ENCODE measurements at regions of chr9 and their contacts with region 1.

Region 1: GRCh38 chr9:22119537-22120158 is 110.5 kb upstream of the CDKN2B start:
- DNase-seq: peak in 3 of 9 donors; percentile 4 to 28 (median 27)
- ATAC-seq: peak; percentile 70
- H3K4me3 ChIP-seq: no peak overlapping the region
- H3K4me3 Mint-ChIP-seq: no peak overlapping the region
- H3K27ac ChIP-seq: no peak overlapping the region
- H3K27ac Mint-ChIP-seq: no peak overlapping the region
- H3K4me1 ChIP-seq: no peaks in the 10 kb centered on the region
- H3K4me1 Mint-ChIP-seq: peaks cover 0 to 20% (median 0%) of the 10 kb centered on the region in 7 donors
- H3K27me3 ChIP-seq: no peaks in the 10 kb centered on the region
- H3K27me3 Mint-ChIP-seq: peaks cover 5 to 71% (median 10%) of the 10 kb centered on the region in 5 donors

Region 2: DNA sequence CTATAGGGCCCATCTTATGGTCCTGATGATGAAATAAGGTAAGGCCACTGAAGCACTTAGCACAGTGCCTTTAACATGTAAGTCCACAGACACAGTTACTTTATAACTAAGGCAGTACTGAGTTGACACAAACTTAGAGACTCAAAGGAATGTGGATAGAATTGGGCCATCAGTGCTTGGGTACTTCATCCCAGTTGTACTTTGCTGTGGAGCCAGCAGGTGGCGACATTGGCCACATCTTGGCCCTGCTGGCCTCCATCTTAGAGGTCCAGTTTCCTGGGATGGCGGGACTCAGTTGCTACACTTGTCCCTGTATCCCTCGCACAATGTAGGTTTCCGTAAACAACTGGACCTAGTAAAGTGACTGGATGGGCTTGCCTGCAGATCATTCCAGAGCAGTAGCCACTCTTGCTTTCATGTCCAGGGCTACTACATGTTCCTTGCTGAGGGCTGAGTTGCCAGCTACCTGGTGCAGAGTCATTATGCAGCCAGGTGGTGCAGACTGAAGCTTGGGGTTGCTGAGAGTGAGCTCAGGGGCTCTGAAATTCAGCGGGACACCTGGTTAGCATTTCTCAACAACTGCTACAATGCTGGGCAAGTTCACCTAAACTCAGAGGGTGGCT is 306.6 kb before region 1 on chr9:
- CTCF ChIA-PET with region 1: interaction called, 11 read pairs
- POLR2A ChIA-PET with region 1: no interaction called
- intact Hi-C with region 1: loop called (anchors 1 kb)
- DNase-seq: peak; percentile 11 to 69 (median 50)
- ATAC-seq: peak; percentile 82
- H3K4me3 ChIP-seq: no peak overlapping the region
- H3K4me3 Mint-ChIP-seq: no peak overlapping the region
- H3K27ac ChIP-seq: no peak overlapping the region
- H3K27ac Mint-ChIP-seq: peak overlapping the region in 4 of 9 donors; percentile 6 to 81 (median 64)
- H3K4me1 ChIP-seq: peaks cover 7 to 12% of the 10 kb centered on the region in 2 donors
- H3K4me1 Mint-ChIP-seq: peaks cover 6 to 40% (median 17%) of the 10 kb centered on the region in 7 donors
- H3K27me3 ChIP-seq: no peaks in the 10 kb centered on the region
- H3K27me3 Mint-ChIP-seq: no peaks in the 10 kb centered on the region

Region 3: GRCh38 chr9:22008736-22009562 is 110.7 kb before region 1 on chr9 and contains the start of gene CDKN2B:
- CTCF ChIA-PET with region 1: no interaction called
- POLR2A ChIA-PET with region 1: no interaction called
- intact Hi-C with region 1: loop called in 1 of 2 experiments (anchors 1 kb)
- DNase-seq: peak in 6 of 9 donors; percentile 30 to 82 (median 53)
- ATAC-seq: peak; percentile 90
- H3K4me3 ChIP-seq: peak within 1 kb of the TSS; percentile 57
- H3K4me3 Mint-ChIP-seq: peak within 1 kb of the TSS; percentile 46 to 86 (median 71)
- H3K27ac ChIP-seq: no peak within 1 kb of the TSS
- H3K27ac Mint-ChIP-seq: peak within 1 kb of the TSS in 2 of 9 donors; percentile 14 to 61
- H3K4me1 ChIP-seq: peaks cover 9 to 20% of the 10 kb centered on the region in 2 donors
- H3K4me1 Mint-ChIP-seq: peaks cover 17 to 32% (median 23%) of the 10 kb centered on the region in 7 donors
- H3K27me3 ChIP-seq: peaks cover 3 to 46% of the 10 kb centered on the region in 2 donors
- H3K27me3 Mint-ChIP-seq: peaks cover 67 to 84% (median 71%) of the 10 kb centered on the region in 5 donors
- total RNA-seq, gene CDKN2B: 0.32 to 4.1 (median 1.6) TPM in 3 of 5 experiments, not detected in the others

Region 4: DNA sequence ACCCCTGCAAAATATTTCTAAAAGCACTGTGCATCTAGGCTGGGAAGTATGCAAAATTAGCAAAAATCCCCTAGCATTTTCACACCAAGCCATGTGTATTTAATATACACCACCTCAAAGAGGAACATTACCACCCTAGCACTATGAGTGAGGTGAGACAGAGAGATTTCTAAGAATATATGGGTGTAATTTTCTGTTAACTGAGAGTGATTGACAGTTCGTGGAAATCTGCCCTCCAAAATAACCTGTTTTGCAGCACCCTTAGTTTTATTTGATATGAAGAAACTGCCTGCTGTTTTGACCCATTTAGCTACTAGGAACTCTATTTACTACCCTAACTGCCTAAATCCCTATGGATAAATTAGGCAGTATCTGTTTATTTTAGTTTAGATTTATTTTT is 46.3 kb before region 1 on chr9:
- CTCF ChIA-PET with region 1: no interaction called
- POLR2A ChIA-PET with region 1: no interaction called
- intact Hi-C with region 1: loop called in 1 of 2 experiments (anchors 2 kb)
- DNase-seq: no peak
- ATAC-seq: no peak
- H3K4me3 ChIP-seq: no peak overlapping the region
- H3K4me3 Mint-ChIP-seq: peak overlapping the region in 4 of 10 donors; percentile 15 to 63 (median 38)
- H3K27ac ChIP-seq: no peak overlapping the region
- H3K27ac Mint-ChIP-seq: peak overlapping the region in 3 of 9 donors; percentile 49 to 80 (median 53)
- H3K4me1 ChIP-seq: peaks cover 0 to 26% of the 10 kb centered on the region in 2 donors
- H3K4me1 Mint-ChIP-seq: peaks cover 15 to 57% (median 31%) of the 10 kb centered on the region in 7 donors
- H3K27me3 ChIP-seq: no peaks in the 10 kb centered on the region
- H3K27me3 Mint-ChIP-seq: peaks cover 0 to 44% (median 4%) of the 10 kb centered on the region in 5 donors

Region 5: GRCh38 chr9:22107147-22108045 is 12.3 kb before region 1 on chr9:
- CTCF ChIA-PET with region 1: interaction called, 12 read pairs
- POLR2A ChIA-PET with region 1: no interaction called
- intact Hi-C with region 1: no loop called
- DNase-seq: no peak
- ATAC-seq: no peak
- H3K4me3 ChIP-seq: no peak overlapping the region
- H3K4me3 Mint-ChIP-seq: no peak overlapping the region
- H3K27ac ChIP-seq: no peak overlapping the region
- H3K27ac Mint-ChIP-seq: no peak overlapping the region
- H3K4me1 ChIP-seq: no peaks in the 10 kb centered on the region
- H3K4me1 Mint-ChIP-seq: peaks cover 0 to 43% (median 0%) of the 10 kb centered on the region in 7 donors
- H3K27me3 ChIP-seq: no peaks in the 10 kb centered on the region
- H3K27me3 Mint-ChIP-seq: peaks cover 0 to 69% (median 5%) of the 10 kb centered on the region in 5 donors

Region 6: DNA sequence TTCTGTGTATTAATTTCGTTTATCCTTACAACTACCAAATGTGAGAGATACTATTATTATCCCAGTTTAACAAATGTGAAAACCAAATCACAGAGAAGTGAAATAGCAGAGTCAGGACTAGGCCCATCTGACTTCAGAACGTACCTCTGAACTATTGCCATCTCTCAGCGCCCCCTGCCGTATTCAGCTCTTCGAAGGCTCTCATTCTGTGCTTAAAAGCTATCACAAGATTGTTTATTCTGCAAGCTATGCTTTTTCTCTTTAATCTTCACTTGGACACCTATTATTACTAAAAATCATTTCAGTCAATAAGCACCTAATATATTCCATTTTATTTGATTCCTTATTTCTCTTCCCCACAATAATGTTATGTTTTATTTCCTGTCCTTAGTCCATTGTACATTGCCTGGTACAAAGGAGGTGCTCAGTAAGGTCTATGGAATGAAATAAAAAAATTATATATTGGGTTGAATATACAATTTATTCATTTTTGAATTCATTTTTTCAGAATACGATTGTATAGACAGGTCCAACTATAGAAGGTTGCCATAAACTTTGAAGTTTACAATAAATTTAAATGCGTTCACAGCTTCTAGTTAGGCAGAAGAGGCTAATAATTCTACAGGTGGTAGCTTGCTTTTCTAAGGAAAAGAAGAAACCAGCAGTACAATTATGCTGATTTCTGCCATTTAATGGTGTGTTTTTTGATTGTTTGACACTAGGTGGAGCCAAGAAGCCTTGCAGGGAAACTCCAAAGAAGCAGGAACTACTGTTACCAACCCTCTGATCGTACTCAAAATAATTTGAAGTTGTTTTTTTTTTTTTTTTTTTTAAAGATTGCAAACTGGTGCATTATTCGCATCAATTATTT is 124.7 kb after region 1 on chr9:
- CTCF ChIA-PET with region 1: no interaction called
- POLR2A ChIA-PET with region 1: no interaction called
- intact Hi-C with region 1: loop called (anchors 5 to 10 kb)
- DNase-seq: peak in 6 of 9 donors; percentile 5 to 35 (median 16)
- ATAC-seq: peak; percentile 84
- H3K4me3 ChIP-seq: no peak overlapping the region
- H3K4me3 Mint-ChIP-seq: peak overlapping the region in 6 of 10 donors; percentile 6 to 61 (median 38)
- H3K27ac ChIP-seq: no peak overlapping the region
- H3K27ac Mint-ChIP-seq: no peak overlapping the region
- H3K4me1 ChIP-seq: no peaks in the 10 kb centered on the region
- H3K4me1 Mint-ChIP-seq: peaks cover 0 to 20% (median 9%) of the 10 kb centered on the region in 7 donors
- H3K27me3 ChIP-seq: no peaks in the 10 kb centered on the region
- H3K27me3 Mint-ChIP-seq: peaks cover 5 to 55% (median 14%) of the 10 kb centered on the region in 5 donors

Region 7: GRCh38 chr9:22425551-22425950 is 305.9 kb after region 1 on chr9:
- CTCF ChIA-PET with region 1: no interaction called
- POLR2A ChIA-PET with region 1: no interaction called
- intact Hi-C with region 1: no loop called
- DNase-seq: no peak
- ATAC-seq: no peak
- H3K4me3 ChIP-seq: no peak overlapping the region
- H3K4me3 Mint-ChIP-seq: no peak overlapping the region
- H3K27ac ChIP-seq: no peak overlapping the region
- H3K27ac Mint-ChIP-seq: no peak overlapping the region
- H3K4me1 ChIP-seq: no peaks in the 10 kb centered on the region
- H3K4me1 Mint-ChIP-seq: no peaks in the 10 kb centered on the region
- H3K27me3 ChIP-seq: no peaks in the 10 kb centered on the region
- H3K27me3 Mint-ChIP-seq: peaks cover 3 to 16% (median 10%) of the 10 kb centered on the region in 5 donors